ENCODE measurements at regions of chrX and their contacts with region 1.

Region 1: GRCh38 chrX:136028251-136028984 is 43.2 kb downstream of the SLC9A6 start:
- DNase-seq: no peak
- H3K4me3 ChIP-seq: no peak overlapping the region
- H3K27ac ChIP-seq: peak overlapping the region in 8 of 59 donors; percentile 1 to 72 (median 55)
- H3K27me3 ChIP-seq: peaks cover 0 to 64% (median 5%) of the 10 kb centered on the region in 45 donors
- CTCF ChIP-seq: peak; percentile 33 to 80 (median 65)

Region 2: DNA sequence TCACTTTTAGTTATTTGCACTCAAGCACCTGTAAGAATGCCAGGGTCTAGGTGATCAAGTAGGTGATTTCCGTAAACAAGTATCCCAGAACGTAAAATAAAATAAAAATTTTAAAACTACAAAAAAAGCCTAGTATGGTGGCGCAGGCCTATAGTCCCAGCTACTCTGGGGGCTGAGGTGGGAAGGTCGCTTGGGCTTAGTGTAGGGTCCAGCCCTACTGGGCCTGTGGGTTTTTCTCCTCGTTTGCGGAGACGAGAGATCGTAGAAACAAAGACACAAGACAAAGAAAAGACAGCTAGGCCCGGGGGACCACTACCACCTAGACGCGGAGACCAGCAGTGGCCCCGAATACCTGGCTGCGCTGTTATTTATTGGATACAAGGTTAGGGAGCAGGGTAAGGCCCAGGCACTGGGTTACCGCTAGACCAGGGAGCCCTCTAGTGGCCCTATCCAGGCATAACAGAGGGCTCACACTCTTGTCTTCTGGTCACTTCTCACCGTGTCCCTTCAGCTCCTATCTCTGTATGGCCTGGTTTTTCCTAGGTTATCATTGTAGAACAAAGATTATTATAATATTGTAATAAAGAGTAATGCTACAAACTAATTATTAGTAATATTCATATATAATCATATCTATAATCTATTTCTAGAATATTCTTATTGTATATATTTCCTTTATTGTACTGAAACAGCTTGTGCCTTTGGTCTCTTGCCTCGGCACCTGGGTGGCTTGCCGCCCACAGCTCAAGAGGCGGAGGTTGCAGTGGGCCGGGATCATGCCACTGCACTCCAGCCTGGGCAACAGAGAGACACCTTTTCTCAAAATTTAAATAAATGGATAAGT is 96.6 kb before region 1 on chrX:
- intact Hi-C with region 1: no loop called
- DNase-seq: peak in 9 of 10 donors; percentile 15 to 52 (median 45)
- H3K4me3 ChIP-seq: no peak overlapping the region
- H3K27ac ChIP-seq: no peak overlapping the region
- H3K27me3 ChIP-seq: peaks cover 0 to 70% (median 14%) of the 10 kb centered on the region in 45 donors
- CTCF ChIP-seq: peak; percentile 17 to 73 (median 57)

Region 3: GRCh38 chrX:136162831-136163570 is 134.6 kb after region 1 on chrX:
- intact Hi-C with region 1: loop called (anchors 5 to 10 kb)
- DNase-seq: peak in 1 of 10 donors; percentile 48
- H3K4me3 ChIP-seq: no peak overlapping the region
- H3K27ac ChIP-seq: no peak overlapping the region
- H3K27me3 ChIP-seq: peaks cover 0 to 62% (median 8%) of the 10 kb centered on the region in 45 donors
- CTCF ChIP-seq: peak in 53 of 56 donors; percentile 23 to 70 (median 52)

Region 4: GRCh38 chrX:136209016-136209738 is 180.8 kb after region 1 on chrX:
- intact Hi-C with region 1: loop called in 1 of 2 experiments (anchors 5 kb)
- DNase-seq: peak in 3 of 10 donors; percentile 25 to 37 (median 26)
- H3K4me3 ChIP-seq: no peak overlapping the region
- H3K27ac ChIP-seq: peak overlapping the region in 6 of 59 donors; percentile 9 to 66 (median 42)
- H3K27me3 ChIP-seq: peaks cover 0 to 90% (median 24%) of the 10 kb centered on the region in 45 donors
- CTCF ChIP-seq: peak in 54 of 56 donors; percentile 17 to 64 (median 48)

Region 5: GRCh38 chrX:136268051-136269048 is 239.9 kb after region 1 on chrX:
- intact Hi-C with region 1: loop called (anchors 2 to 10 kb)
- DNase-seq: peak in 2 of 10 donors; percentile 34 to 45
- H3K4me3 ChIP-seq: no peak overlapping the region
- H3K27ac ChIP-seq: no peak overlapping the region
- H3K27me3 ChIP-seq: peaks cover 0 to 54% (median 6%) of the 10 kb centered on the region in 45 donors
- CTCF ChIP-seq: peak; percentile 48 to 85 (median 71)

Region 6: GRCh38 chrX:136694431-136695087 is 666.1 kb after region 1 on chrX:
- intact Hi-C with region 1: loop called in 1 of 2 experiments (anchors 5 kb)
- DNase-seq: no peak
- H3K4me3 ChIP-seq: peak overlapping the region in 3 of 59 donors; percentile 3 to 26 (median 7)
- H3K27ac ChIP-seq: no peak overlapping the region
- H3K27me3 ChIP-seq: peaks cover 0 to 66% (median 20%) of the 10 kb centered on the region in 45 donors
- CTCF ChIP-seq: peak in 55 of 56 donors; percentile 31 to 82 (median 66)